ENCODE measurements at regions of chr19 and their contacts with region 1.

Region 1: DNA sequence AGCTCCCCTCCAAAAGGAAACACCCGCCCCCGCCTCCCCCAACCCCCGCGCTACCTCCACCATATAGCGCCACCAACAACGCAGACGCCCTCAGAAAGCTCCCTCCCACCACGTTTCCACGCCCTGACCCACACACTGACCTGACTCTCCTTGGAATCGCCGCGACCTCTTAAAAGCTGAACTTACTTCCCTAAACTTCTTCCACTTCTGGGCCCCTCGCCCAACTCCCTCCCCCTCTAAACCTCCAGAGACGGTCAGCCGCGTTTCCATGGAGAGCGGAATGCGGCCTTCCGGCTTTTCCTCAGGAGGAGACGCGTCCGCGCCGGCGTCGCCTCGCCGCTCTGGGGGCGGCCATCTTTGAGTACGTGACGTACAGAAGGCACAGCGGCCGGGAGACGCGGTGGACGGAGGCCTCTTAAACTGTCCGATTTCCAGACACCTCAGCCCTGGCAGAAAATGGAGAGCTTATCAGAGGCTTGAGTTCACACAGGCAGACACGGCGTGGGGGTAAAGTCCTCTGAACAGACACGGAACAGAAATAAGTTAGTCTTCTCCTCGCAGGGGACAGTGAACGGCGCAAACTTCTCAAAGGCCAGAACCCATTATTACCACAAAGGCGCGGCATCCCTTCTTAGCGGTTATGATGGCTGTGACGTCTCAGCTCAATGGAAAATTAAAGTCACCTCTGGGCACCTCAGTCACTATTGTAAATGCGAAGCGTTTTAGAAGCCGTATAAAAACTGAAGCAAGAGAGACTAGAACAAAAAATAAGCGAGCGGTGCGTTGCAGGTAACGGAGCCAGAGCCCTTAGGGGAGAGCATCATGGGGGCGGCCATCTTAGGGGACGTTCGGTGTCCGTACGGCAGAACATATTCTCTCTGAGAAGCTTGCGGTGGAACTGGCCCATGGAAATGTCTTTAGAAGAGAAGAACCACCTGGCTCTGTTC is at the start of gene ZNF432:
- DNase-seq: peak; percentile 75 to 87 (median 82)
- ATAC-seq: peak; percentile 92
- H3K4me3 ChIP-seq: peak within 1 kb of the TSS; percentile 78
- H3K4me3 Mint-ChIP-seq: peak within 1 kb of the TSS; percentile 95 to 100 (median 98)
- H3K27ac ChIP-seq: peak within 1 kb of the TSS; percentile 97
- H3K27ac Mint-ChIP-seq: peak within 1 kb of the TSS; percentile 97 to 99 (median 99)
- H3K4me1 ChIP-seq: peaks cover 0 to 7% of the 10 kb centered on the region in 2 donors
- H3K4me1 Mint-ChIP-seq: peaks cover 10 to 43% (median 25%) of the 10 kb centered on the region in 7 donors
- H3K27me3 ChIP-seq: no peaks in the 10 kb centered on the region
- H3K27me3 Mint-ChIP-seq: no peaks in the 10 kb centered on the region
- total RNA-seq, gene ZNF432: 13.2 to 25.0 (median 18.1) TPM

Region 2: GRCh38 chr19:51799034-51799773 is 249.6 kb before region 1 on chr19:
- CTCF ChIA-PET with region 1: no interaction called
- POLR2A ChIA-PET with region 1: no interaction called
- intact Hi-C with region 1: no loop called
- DNase-seq: no peak
- ATAC-seq: peak; percentile 78
- H3K4me3 ChIP-seq: no peak overlapping the region
- H3K4me3 Mint-ChIP-seq: no peak overlapping the region
- H3K27ac ChIP-seq: no peak overlapping the region
- H3K27ac Mint-ChIP-seq: no peak overlapping the region
- H3K4me1 ChIP-seq: no peaks in the 10 kb centered on the region
- H3K4me1 Mint-ChIP-seq: peaks cover 0 to 3% (median 0%) of the 10 kb centered on the region in 7 donors
- H3K27me3 ChIP-seq: no peaks in the 10 kb centered on the region
- H3K27me3 Mint-ChIP-seq: peaks cover 0 to 37% (median 30%) of the 10 kb centered on the region in 5 donors

Region 3: DNA sequence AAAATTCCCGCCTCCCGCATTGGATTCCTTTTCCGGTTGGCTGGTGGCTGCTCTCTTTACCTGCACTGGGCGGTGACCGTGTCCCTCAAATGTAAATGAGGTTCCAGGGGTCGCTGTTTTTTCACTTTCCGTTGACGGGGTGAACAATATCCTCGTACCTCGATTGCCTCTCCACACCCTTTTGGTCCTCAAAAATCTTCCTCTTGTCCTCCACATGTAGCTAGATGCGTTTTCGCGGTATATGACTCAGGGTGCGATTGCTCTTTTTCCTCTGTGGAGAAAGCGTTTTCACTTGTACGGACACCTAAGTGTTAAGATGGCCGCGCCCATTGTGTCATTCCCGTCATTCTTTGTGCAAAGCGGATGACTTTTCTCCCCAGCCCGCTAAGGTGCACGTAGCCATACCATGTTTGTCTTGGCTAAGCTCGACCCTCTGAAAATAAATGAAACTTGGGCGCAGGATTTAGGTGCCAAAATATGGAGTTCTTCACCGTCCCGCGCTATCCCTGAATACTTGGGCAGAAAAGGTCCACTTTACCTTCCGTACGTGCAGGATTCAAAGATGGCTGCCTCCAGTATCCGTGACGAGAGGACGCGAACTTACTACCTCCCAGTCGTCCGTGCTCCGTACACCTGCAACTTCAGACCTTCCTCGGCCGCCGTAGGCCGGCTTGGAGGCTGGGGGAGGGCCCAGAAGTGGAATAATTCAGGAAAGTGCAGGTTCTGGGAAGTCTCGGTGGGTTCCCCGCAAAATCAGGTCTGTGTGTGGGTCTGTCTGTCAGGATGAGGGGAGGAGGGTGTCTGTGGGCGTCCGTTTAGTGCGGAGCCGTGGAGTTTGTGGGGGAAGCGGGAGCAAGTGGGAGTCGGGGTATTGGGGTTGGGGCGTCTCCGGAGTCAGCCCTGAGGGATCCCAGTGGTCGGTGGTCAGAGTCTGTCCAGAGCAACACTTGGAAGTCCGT is 121.8 kb before region 1 on chr19 and contains the start of gene ZNF613:
- CTCF ChIA-PET with region 1: no interaction called
- POLR2A ChIA-PET with region 1: no interaction called
- intact Hi-C with region 1: loop called (anchors 1 kb)
- DNase-seq: peak; percentile 65 to 87 (median 83)
- ATAC-seq: peak; percentile 92
- H3K4me3 ChIP-seq: peak within 1 kb of the TSS; percentile 70
- H3K4me3 Mint-ChIP-seq: peak within 1 kb of the TSS; percentile 90 to 100 (median 97)
- H3K27ac ChIP-seq: peak within 1 kb of the TSS; percentile 77
- H3K27ac Mint-ChIP-seq: peak within 1 kb of the TSS; percentile 87 to 96 (median 92)
- H3K4me1 ChIP-seq: peaks cover 4% of the 10 kb centered on the region in 2 donors
- H3K4me1 Mint-ChIP-seq: peaks cover 19 to 41% (median 36%) of the 10 kb centered on the region in 7 donors
- H3K27me3 ChIP-seq: no peaks in the 10 kb centered on the region
- H3K27me3 Mint-ChIP-seq: no peaks in the 10 kb centered on the region
- total RNA-seq, gene ZNF613: 1.5 to 9.6 (median 5.2) TPM

Region 4: DNA sequence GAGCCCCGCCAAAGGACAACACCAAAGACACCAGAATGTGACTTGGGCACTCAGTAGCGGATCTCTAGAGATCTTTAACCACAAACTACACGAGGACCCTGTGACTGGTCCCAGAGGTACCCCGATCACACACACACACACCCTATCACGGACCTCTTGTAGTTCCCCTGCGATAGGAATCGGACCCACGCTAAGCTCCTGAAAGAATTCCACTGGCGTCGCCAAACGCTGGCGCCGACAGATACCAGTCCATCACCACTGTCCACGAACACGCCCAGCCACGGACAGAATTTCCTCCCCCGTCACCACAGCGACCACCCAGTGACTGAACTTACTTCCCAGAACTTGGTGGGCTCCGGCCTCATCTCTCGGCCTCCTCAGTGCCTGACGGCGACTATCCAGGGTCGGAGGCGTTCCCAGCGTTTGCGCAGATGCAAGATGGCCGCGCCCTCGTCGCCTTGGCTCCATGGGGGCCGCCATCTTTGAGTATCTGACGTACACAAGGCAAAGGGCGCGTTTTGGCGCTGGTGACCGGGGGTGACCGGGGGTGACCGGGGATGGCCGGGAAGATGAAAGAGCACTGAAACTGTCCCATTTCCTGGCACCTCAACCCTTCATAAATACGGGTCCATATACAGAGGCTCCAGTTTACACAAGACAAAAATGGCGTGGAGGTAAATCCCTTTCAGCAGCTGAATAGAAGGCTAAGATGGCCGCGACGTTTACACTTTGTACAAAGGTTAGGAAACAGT is 40.8 kb before region 1 on chr19 and contains the start of gene ZNF615:
- CTCF ChIA-PET with region 1: interaction called, 3 read pairs
- POLR2A ChIA-PET with region 1: interaction called, 12 read pairs
- intact Hi-C with region 1: loop called (anchors 1 kb)
- DNase-seq: peak; percentile 80 to 96 (median 85)
- ATAC-seq: peak; percentile 97
- H3K4me3 ChIP-seq: peak within 1 kb of the TSS; percentile 89
- H3K4me3 Mint-ChIP-seq: peak within 1 kb of the TSS; percentile 92 to 98 (median 98)
- H3K27ac ChIP-seq: peak within 1 kb of the TSS; percentile 83
- H3K27ac Mint-ChIP-seq: peak within 1 kb of the TSS; percentile 91 to 99 (median 95)
- H3K4me1 ChIP-seq: peaks cover 7% of the 10 kb centered on the region in 2 donors
- H3K4me1 Mint-ChIP-seq: peaks cover 15 to 33% (median 21%) of the 10 kb centered on the region in 7 donors
- H3K27me3 ChIP-seq: no peaks in the 10 kb centered on the region
- H3K27me3 Mint-ChIP-seq: no peaks in the 10 kb centered on the region
- total RNA-seq, gene ZNF615: 8.7 to 20.9 (median 11.0) TPM

Region 5: DNA sequence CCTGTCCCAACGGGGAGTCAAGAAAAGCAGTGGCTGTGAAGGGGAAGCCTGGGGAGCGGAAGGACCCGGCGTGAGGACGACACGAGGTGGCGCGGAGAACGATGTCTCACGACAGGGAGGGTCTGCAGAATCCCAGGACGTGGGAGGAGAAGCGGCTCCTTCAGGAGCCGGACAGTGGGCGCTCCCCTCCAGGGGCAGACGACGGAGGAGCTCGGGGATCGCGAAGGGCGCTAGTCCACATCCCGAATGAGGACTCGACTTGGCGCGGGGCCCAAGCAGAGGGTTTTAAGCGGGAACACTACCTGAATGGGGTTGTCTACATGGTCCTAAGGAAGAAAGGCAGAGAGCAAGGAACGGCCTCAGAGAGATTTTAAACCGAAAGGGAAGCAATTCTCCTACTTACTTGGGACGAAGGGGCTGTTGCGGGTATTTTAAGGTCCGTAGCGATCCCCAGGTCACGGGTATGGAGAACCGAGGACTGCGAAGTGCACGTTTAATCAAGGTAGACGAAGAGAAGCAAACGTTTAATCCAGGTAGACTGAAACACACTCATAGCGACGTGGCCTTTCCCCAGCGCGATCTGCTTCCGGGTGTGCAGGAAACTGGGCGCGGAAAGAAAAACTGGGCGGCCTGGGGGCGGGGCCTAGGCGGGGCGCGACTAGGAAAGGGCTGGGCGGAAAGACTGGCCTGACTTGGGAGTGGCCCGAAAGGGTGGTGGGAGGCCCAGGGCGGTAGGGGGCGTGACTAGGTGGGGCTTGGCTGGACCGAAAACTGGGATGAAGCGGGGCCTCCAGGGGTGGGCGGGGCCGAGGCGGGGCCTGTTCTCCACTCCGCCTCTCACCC is 46.6 kb after region 1 on chr19 and contains the start of gene ZNF841:
- CTCF ChIA-PET with region 1: no interaction called
- POLR2A ChIA-PET with region 1: interaction called, 3 read pairs
- intact Hi-C with region 1: loop called (anchors 1 to 2 kb)
- DNase-seq: peak; percentile 64 to 84 (median 75)
- ATAC-seq: peak; percentile 98
- H3K4me3 ChIP-seq: peak within 1 kb of the TSS; percentile 86
- H3K4me3 Mint-ChIP-seq: peak within 1 kb of the TSS; percentile 87 to 99 (median 96)
- H3K27ac ChIP-seq: peak within 1 kb of the TSS; percentile 81
- H3K27ac Mint-ChIP-seq: peak within 1 kb of the TSS; percentile 62 to 99 (median 94)
- H3K4me1 ChIP-seq: peaks cover 0 to 9% of the 10 kb centered on the region in 2 donors
- H3K4me1 Mint-ChIP-seq: peaks cover 24 to 47% (median 39%) of the 10 kb centered on the region in 7 donors
- H3K27me3 ChIP-seq: no peaks in the 10 kb centered on the region
- H3K27me3 Mint-ChIP-seq: no peaks in the 10 kb centered on the region
- total RNA-seq, gene ZNF841: 22.6 to 43.5 (median 27.5) TPM

Region 6: GRCh38 chr19:52237771-52238400 is 189.1 kb after region 1 on chr19:
- CTCF ChIA-PET with region 1: interaction called, 4 read pairs
- POLR2A ChIA-PET with region 1: no interaction called
- intact Hi-C with region 1: loop called in 1 of 2 experiments (anchors 10 kb)
- DNase-seq: peak in 8 of 9 donors; percentile 26 to 60 (median 50)
- ATAC-seq: peak; percentile 88
- H3K4me3 ChIP-seq: no peak overlapping the region
- H3K4me3 Mint-ChIP-seq: no peak overlapping the region
- H3K27ac ChIP-seq: no peak overlapping the region
- H3K27ac Mint-ChIP-seq: peak overlapping the region in 1 of 9 donors; percentile 26
- H3K4me1 ChIP-seq: no peaks in the 10 kb centered on the region
- H3K4me1 Mint-ChIP-seq: peaks cover 0 to 6% (median 0%) of the 10 kb centered on the region in 7 donors
- H3K27me3 ChIP-seq: no peaks in the 10 kb centered on the region
- H3K27me3 Mint-ChIP-seq: peaks cover 0 to 2% (median 0%) of the 10 kb centered on the region in 5 donors

Region 7: DNA sequence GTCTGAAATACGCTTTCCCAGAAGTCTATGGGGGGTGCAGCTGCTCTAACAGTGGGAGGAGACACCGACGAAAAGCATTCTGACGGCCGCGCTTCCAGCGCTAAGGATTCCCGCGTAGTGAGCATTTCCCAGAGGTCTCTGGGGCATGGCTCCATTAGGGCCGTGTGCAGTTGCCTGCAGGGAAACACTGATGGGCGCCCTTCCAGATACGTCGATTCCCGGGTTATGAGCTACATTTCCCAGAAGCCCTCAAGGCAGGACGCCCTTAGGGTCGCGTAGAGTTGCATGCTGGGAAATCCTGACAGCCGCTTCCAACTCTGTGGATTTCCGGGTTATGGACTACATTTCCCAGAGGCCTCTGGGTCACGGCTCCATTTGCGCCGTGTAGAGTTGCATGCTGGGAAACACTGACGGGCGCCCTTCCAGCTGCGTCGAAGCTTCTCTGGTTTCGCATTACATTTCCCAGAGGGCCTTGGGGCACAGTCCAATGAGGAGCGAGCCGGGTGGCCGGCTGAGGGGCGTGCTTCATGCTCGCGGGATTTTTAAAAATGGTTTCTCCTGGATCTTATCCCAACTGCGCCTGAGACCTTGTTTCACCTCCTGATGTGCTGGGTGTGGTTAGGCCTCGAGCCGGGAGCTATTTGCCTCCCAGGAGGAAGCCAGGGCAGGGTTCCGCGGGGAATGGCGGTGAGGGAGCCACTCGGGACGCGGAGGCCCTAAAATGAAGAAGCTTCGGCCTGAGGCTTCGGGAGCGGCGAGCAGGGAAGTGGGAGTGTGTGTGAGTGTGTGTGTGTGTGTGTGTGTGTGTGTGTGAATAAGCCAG is 1471.9 kb after region 1 on chr19:
- CTCF ChIA-PET with region 1: no interaction called
- POLR2A ChIA-PET with region 1: interaction called, 5 read pairs
- intact Hi-C with region 1: loop called in 1 of 2 experiments (anchors 2 kb)
- DNase-seq: peak; percentile 65 to 93 (median 89)
- ATAC-seq: peak; percentile 100
- H3K4me3 ChIP-seq: peak overlapping the region; percentile 99
- H3K4me3 Mint-ChIP-seq: peak overlapping the region; percentile 94 to 99 (median 98)
- H3K27ac ChIP-seq: peak overlapping the region; percentile 69
- H3K27ac Mint-ChIP-seq: peak overlapping the region; percentile 84 to 96 (median 94)
- H3K4me1 ChIP-seq: peaks cover 9 to 10% of the 10 kb centered on the region in 2 donors
- H3K4me1 Mint-ChIP-seq: peaks cover 10 to 27% (median 18%) of the 10 kb centered on the region in 7 donors
- H3K27me3 ChIP-seq: no peaks in the 10 kb centered on the region
- H3K27me3 Mint-ChIP-seq: no peaks in the 10 kb centered on the region